ENCODE measurements at regions of chr11 and their contacts with region 1.

Region 1: GRCh38 chr11:62905927-62906531 is 15.1 kb downstream of the CHRM1 start:
- DNase-seq: peak; percentile 82
- CTCF ChIP-seq: peak; percentile 99

Region 2: GRCh38 chr11:63023841-63024648 is 118.0 kb after region 1 on chr11:
- in situ Hi-C with region 1: loop called (anchors 5 kb)
- DNase-seq: peak; percentile 85
- CTCF ChIP-seq: peak; percentile 98

Region 3: GRCh38 chr11:63212742-63213141 is 306.7 kb after region 1 on chr11:
- in situ Hi-C with region 1: loop called (anchors 25 kb)
- DNase-seq: peak; percentile 19
- CTCF ChIP-seq: peak; percentile 29

Region 4: GRCh38 chr11:63652671-63653070 is 746.6 kb after region 1 on chr11:
- in situ Hi-C with region 1: no loop called
- DNase-seq: no peak
- CTCF ChIP-seq: no peak

Measured in GM13976 (cell line).